Caco-2 (cell line): ENCODE measurements at regions of chr7 and their contacts with region 1.

Region 1: DNA sequence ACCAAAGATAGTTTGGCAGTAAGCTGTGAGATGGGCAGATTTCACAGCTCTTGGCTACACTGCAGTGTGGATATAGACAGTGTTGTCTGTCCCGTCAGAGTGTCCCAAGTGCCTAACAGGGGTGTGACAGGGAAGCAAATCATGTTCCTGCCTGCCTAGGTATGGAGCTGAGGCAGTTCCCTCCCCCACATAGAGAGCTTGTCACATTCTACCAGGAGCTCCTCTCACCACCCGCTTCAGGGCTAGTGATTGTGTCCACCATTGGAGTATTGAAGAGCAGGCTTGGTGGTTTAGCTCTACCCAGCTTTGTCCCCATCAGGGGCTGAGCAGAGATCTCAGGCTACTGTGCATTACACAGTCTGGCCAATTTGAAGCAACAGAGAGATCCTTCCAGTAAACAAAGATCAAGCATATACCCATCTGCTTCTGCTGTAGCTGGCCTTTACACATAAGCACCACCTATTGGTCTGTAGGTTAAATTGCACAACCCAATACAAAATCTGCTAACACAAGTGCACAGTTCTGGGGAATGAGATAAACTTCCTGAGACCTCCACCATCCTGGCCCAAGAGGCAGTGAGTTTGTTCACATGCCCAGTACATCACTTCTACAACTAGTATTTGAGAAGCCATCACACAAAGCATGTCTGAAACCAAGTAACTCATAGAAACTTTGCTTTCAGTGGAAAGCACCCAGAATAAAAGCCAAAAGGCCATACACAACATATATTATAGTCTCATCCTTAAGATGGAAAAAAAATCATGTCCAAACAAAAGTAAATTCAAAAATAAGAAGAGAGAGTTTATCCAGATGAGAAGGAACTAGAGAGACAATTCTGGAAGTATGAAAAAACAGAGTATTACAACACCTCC is 67.3 kb downstream of the GLCCI1 start:
- DNase-seq: peak in 1 of 2 experiments; percentile 21
- H3K4me3 ChIP-seq: no peak overlapping the region
- H3K4me3 Mint-ChIP-seq: no peak overlapping the region
- H3K27ac Mint-ChIP-seq: no peak overlapping the region
- H3K4me1 ChIP-seq: no peaks in the 10 kb centered on the region
- H3K4me1 Mint-ChIP-seq: no peaks in the 10 kb centered on the region
- H3K27me3 ChIP-seq: no peaks in the 10 kb centered on the region
- H3K27me3 Mint-ChIP-seq: no peaks in the 10 kb centered on the region
- CTCF ChIP-seq: peak; percentile 23 to 76

Region 2: DNA sequence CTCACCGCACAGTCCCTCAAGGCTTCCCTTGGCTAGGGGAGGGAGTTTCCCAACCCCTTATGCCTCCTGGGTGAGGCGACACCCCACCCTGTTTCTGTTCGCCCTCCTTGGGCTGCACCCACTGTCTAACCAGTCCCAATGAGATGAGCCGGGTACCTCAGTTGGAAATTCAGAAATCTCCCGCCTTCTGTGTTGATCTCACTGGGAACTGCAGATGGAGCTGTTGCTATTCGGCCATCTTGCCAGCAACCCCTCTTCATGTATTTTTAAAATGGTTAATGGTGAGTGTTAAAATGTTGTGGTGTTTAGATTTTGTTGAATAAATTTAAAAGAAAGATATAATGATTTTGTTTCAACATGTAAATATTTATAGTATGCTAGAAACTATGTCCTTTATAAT is 373.4 kb before region 1 on chr7:
- CTCF ChIA-PET with region 1: no interaction called
- POLR2A ChIA-PET with region 1: no interaction called
- intact Hi-C with region 1: loop called (anchors 5 kb)
- DNase-seq: no peak
- H3K4me3 ChIP-seq: no peak overlapping the region
- H3K4me3 Mint-ChIP-seq: no peak overlapping the region
- H3K27ac Mint-ChIP-seq: no peak overlapping the region
- H3K4me1 ChIP-seq: peaks cover 7% of the 10 kb centered on the region; the same call in 1 of the 2 replicates
- H3K4me1 Mint-ChIP-seq: peaks cover 7% of the 10 kb centered on the region
- H3K27me3 ChIP-seq: no peaks in the 10 kb centered on the region
- H3K27me3 Mint-ChIP-seq: no peaks in the 10 kb centered on the region
- CTCF ChIP-seq: peak in 1 of 2 experiments; percentile 43

Region 3: DNA sequence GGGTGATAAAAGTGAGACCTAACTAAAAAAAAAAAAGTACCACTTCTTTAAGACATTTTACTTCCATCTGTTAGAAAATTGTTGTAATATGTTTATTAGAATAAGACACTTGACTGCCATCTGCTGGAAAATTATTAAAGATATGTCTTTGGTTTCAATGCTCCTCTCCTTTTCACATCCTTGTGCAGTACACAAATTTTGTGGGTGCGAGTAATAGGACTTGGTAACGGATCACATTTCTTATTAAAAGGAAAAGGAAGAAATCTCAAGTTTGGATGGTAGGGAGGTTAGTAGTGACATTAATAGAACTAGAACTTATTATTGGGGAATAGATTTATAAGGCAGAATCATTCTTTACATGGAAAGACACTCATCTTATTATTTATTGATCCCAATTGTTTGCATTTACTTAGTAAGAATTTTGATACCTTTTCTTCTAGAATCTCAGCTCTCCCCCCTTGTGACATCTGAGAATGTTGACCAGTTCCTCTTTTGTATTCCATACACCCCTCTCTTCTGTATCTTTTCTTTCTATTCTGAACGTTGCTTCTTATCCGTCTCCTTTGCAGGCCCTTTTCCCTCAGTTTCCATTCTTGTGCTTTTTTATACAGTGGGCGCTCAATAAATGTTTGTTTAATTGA is 274.4 kb before region 1 on chr7:
- CTCF ChIA-PET with region 1: interaction called, 3 read pairs
- POLR2A ChIA-PET with region 1: no interaction called
- intact Hi-C with region 1: loop called (anchors 10 kb)
- DNase-seq: peak in 1 of 2 experiments; percentile 10
- H3K4me3 ChIP-seq: no peak overlapping the region
- H3K4me3 Mint-ChIP-seq: no peak overlapping the region
- H3K27ac Mint-ChIP-seq: no peak overlapping the region
- H3K4me1 ChIP-seq: peaks cover 33% of the 10 kb centered on the region
- H3K4me1 Mint-ChIP-seq: peaks cover 32% of the 10 kb centered on the region
- H3K27me3 ChIP-seq: no peaks in the 10 kb centered on the region
- H3K27me3 Mint-ChIP-seq: no peaks in the 10 kb centered on the region
- CTCF ChIP-seq: peak; percentile 6 to 35

Region 4: GRCh38 chr7:7808156-7808555 is 227.7 kb before region 1 on chr7:
- CTCF ChIA-PET with region 1: no interaction called
- POLR2A ChIA-PET with region 1: no interaction called
- intact Hi-C with region 1: loop called (anchors 10 kb)
- DNase-seq: no peak
- H3K4me3 ChIP-seq: no peak overlapping the region
- H3K4me3 Mint-ChIP-seq: no peak overlapping the region
- H3K27ac Mint-ChIP-seq: no peak overlapping the region
- H3K4me1 ChIP-seq: peaks cover 15% of the 10 kb centered on the region
- H3K4me1 Mint-ChIP-seq: no peaks in the 10 kb centered on the region
- H3K27me3 ChIP-seq: no peaks in the 10 kb centered on the region
- H3K27me3 Mint-ChIP-seq: no peaks in the 10 kb centered on the region
- CTCF ChIP-seq: no peak

Region 5: GRCh38 chr7:7911371-7912155 is 124.3 kb before region 1 on chr7:
- CTCF ChIA-PET with region 1: no interaction called
- POLR2A ChIA-PET with region 1: no interaction called
- intact Hi-C with region 1: loop called (anchors 5 kb)
- DNase-seq: peak; percentile 75 to 84
- H3K4me3 ChIP-seq: no peak overlapping the region
- H3K4me3 Mint-ChIP-seq: no peak overlapping the region
- H3K27ac Mint-ChIP-seq: peak overlapping the region; percentile 87
- H3K4me1 ChIP-seq: peaks cover 41% of the 10 kb centered on the region
- H3K4me1 Mint-ChIP-seq: peaks cover 18% of the 10 kb centered on the region
- H3K27me3 ChIP-seq: no peaks in the 10 kb centered on the region
- H3K27me3 Mint-ChIP-seq: no peaks in the 10 kb centered on the region
- CTCF ChIP-seq: no peak

Region 6: GRCh38 chr7:7968543-7969305 is 67.2 kb before region 1 on chr7 and contains the start of gene GLCCI1:
- CTCF ChIA-PET with region 1: interaction called, 3 read pairs
- POLR2A ChIA-PET with region 1: interaction called, 3 read pairs
- intact Hi-C with region 1: loop called (anchors 1 kb)
- DNase-seq: peak; percentile 98
- H3K4me3 ChIP-seq: peak within 1 kb of the TSS; percentile 82
- H3K4me3 Mint-ChIP-seq: peak within 1 kb of the TSS; percentile 27
- H3K27ac Mint-ChIP-seq: peak within 1 kb of the TSS; percentile 31
- H3K4me1 ChIP-seq: no peaks in the 10 kb centered on the region
- H3K4me1 Mint-ChIP-seq: peaks cover 6% of the 10 kb centered on the region
- H3K27me3 ChIP-seq: no peaks in the 10 kb centered on the region
- H3K27me3 Mint-ChIP-seq: no peaks in the 10 kb centered on the region
- CTCF ChIP-seq: no peak
- total RNA-seq, gene GLCCI1: 18.8 and 19.3 TPM in 2 replicates